ENCODE measurements at regions of chr2 and their contacts with region 1.

Region 1: GRCh38 chr2:132560562-132560961 is 109.4 kb downstream of the LYPD1 start:
- DNase-seq: no peak
- H3K27ac ChIP-seq: no peak overlapping the region
- CTCF ChIP-seq: no peak

Region 2: GRCh38 chr2:133509777-133510176 is 949.2 kb after region 1 on chr2:
- CTCF ChIA-PET with region 1: interaction called, 10 read pairs
- POLR2A ChIA-PET with region 1: no interaction called
- DNase-seq: no peak
- H3K27ac ChIP-seq: no peak overlapping the region
- CTCF ChIP-seq: no peak

Measured in RWPE1 (cell line).